A673 (cell line): ENCODE measurements at regions of chr3 and their contacts with region 1.

Region 1: DNA sequence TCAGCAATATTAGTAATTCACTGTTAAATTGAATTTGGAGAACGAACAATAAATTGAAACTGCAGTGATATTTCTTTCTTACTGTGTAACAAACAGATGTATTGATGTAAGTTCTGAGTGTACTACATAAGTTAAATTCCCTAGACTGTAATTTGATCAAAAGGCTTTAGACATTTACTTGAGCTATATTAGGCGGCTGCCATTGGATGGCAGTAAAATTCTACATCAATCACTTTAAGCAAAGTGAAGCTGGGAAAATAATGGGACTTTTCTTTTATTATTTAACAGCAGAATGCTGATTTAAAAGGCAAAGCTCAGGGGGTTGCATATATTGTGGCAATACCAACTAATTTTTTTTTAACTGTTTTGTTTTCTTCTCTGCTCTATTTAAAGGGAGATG is 212.6 kb upstream of the PLSCR5 start:
- DNase-seq: peak; percentile 86
- H3K4me3 ChIP-seq: no peak overlapping the region
- H3K27ac ChIP-seq: no peak overlapping the region
- H3K4me1 ChIP-seq: peaks cover 22% of the 10 kb centered on the region
- H3K27me3 ChIP-seq: no peaks in the 10 kb centered on the region
- CTCF ChIP-seq: peak; percentile 68

Region 2: DNA sequence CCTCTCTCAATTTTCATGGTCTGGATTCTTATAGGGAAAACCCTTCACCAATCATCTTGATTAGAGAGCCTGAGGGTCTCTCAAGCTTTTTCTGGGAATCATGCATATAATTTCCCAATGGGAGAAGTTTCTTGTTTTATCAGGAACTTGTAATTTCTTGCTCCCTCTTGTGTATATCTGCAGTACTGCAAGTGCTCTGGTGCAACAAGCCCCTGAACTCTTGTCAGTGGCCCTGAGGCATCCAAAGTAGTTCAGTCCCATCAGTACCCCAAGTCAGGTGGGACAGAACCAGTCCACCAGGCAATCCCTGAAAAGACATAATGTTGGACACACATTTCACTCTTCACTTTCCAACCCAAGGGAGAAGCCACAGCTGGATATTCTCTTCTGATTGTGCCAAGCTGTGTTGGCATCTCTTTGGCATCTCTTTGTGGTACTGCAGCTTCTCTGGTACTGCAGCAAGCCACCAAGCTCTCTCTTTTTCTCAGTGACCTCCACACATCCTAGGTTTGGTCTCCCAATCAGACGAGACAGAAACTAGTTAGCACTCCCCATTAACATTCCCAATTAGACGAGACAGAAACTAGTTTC is 374.2 kb after region 1 on chr3:
- CTCF ChIA-PET with region 1: interaction called, 7 read pairs
- POLR2A ChIA-PET with region 1: no interaction called
- intact Hi-C with region 1: loop called (anchors 1 kb)
- DNase-seq: peak; percentile 82
- H3K4me3 ChIP-seq: no peak overlapping the region
- H3K27ac ChIP-seq: no peak overlapping the region
- H3K4me1 ChIP-seq: peaks cover 15% of the 10 kb centered on the region
- H3K27me3 ChIP-seq: no peaks in the 10 kb centered on the region
- CTCF ChIP-seq: peak; percentile 89

Region 3: GRCh38 chr3:147361454-147362420 is 544.0 kb after region 1 on chr3:
- CTCF ChIA-PET with region 1: no interaction called
- POLR2A ChIA-PET with region 1: no interaction called
- intact Hi-C with region 1: loop called (anchors 10 kb)
- DNase-seq: peak; percentile 81
- H3K4me3 ChIP-seq: no peak overlapping the region
- H3K27ac ChIP-seq: no peak overlapping the region
- H3K4me1 ChIP-seq: peaks cover 9% of the 10 kb centered on the region
- H3K27me3 ChIP-seq: peaks cover 95% of the 10 kb centered on the region
- CTCF ChIP-seq: peak; percentile 91